B cell (primary cell): ENCODE measurements at regions of chr17 and their contacts with region 1.

Region 1: GRCh38 chr17:47286198-47286914 is 32.7 kb downstream of the ITGB3 start:
- DNase-seq: peak; percentile 83
- ATAC-seq: peak; percentile 87
- H3K4me3 ChIP-seq: no peak overlapping the region
- H3K4me3 Mint-ChIP-seq: peak overlapping the region; percentile 72
- H3K27ac ChIP-seq: peak overlapping the region; percentile 27 to 68
- H3K27ac Mint-ChIP-seq: peak overlapping the region; percentile 89
- H3K4me1 ChIP-seq: peaks cover 29% of the 10 kb centered on the region in 2 donors
- H3K4me1 Mint-ChIP-seq: peaks cover 41% of the 10 kb centered on the region
- H3K27me3 ChIP-seq: no peaks in the 10 kb centered on the region
- H3K27me3 Mint-ChIP-seq: no peaks in the 10 kb centered on the region
- CTCF ChIP-seq: no peak

Region 2: DNA sequence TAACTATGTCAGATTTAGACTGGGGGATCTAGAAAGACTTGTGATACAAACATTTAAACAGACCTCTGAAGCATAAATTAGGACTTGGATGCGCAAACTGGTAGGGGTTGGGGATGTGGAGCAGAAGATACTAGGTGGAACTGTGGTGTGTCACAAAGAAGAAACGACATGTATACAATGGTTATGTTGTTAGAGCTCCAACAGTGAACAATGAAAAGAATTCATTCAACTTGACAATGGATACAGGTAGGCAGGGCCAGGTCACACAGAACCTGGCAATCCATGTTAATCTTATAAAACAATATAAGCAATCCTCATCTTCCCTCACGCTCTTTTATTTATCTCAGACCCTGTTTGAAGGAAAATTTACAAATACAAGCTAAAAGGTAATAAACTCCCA is 199.3 kb before region 1 on chr17:
- CTCF ChIA-PET with region 1: no interaction called
- POLR2A ChIA-PET with region 1: no interaction called
- intact Hi-C with region 1: no loop called
- DNase-seq: no peak
- ATAC-seq: no peak
- H3K4me3 ChIP-seq: no peak overlapping the region
- H3K4me3 Mint-ChIP-seq: no peak overlapping the region
- H3K27ac ChIP-seq: no peak overlapping the region
- H3K27ac Mint-ChIP-seq: no peak overlapping the region
- H3K4me1 ChIP-seq: peaks cover 5 to 9% of the 10 kb centered on the region in 2 donors
- H3K4me1 Mint-ChIP-seq: peaks cover 39% of the 10 kb centered on the region
- H3K27me3 ChIP-seq: no peaks in the 10 kb centered on the region
- H3K27me3 Mint-ChIP-seq: no peaks in the 10 kb centered on the region
- CTCF ChIP-seq: no peak

Region 3: GRCh38 chr17:47165137-47165536 is 121.2 kb before region 1 on chr17:
- CTCF ChIA-PET with region 1: no interaction called
- POLR2A ChIA-PET with region 1: no interaction called
- intact Hi-C with region 1: no loop called
- DNase-seq: no peak
- ATAC-seq: no peak
- H3K4me3 ChIP-seq: no peak overlapping the region
- H3K4me3 Mint-ChIP-seq: no peak overlapping the region
- H3K27ac ChIP-seq: peak overlapping the region in 1 of 2 donors; percentile 55
- H3K27ac Mint-ChIP-seq: peak overlapping the region; percentile 38
- H3K4me1 ChIP-seq: peaks cover 14 to 19% of the 10 kb centered on the region in 2 donors
- H3K4me1 Mint-ChIP-seq: peaks cover 31% of the 10 kb centered on the region
- H3K27me3 ChIP-seq: no peaks in the 10 kb centered on the region
- H3K27me3 Mint-ChIP-seq: no peaks in the 10 kb centered on the region
- CTCF ChIP-seq: no peak

Region 4: DNA sequence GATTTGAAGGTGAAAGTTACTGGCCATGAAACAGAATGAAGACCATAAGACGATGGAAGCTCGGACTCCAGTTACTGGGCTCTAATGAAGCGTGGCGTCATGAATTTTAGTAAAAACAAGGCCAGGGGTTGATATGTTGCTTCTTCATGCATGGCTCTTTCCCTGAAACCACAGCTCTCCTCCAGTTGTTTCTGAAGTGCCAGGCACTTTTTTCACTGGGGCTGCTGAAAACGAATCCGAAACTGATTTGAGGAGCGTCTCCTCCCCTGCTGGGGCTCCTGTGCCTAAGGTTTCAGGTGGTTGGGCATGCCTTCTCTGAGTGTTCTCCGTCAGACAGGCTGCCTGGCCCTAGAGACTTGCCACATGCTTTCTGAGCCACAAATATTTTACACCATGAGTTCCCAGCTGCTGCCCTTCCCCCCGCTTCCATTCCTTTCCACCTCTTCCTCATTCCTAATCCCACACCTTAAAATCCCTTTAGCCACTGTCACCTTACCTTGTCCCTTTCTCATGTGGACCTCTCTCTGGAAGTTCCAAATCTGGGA is 80.9 kb before region 1 on chr17:
- CTCF ChIA-PET with region 1: no interaction called
- POLR2A ChIA-PET with region 1: no interaction called
- intact Hi-C with region 1: loop called (anchors 1 kb)
- DNase-seq: peak; percentile 87
- ATAC-seq: peak; percentile 69
- H3K4me3 ChIP-seq: peak overlapping the region; percentile 30 to 56 (median 45)
- H3K4me3 Mint-ChIP-seq: peak overlapping the region; percentile 87
- H3K27ac ChIP-seq: peak overlapping the region; percentile 96 to 97
- H3K27ac Mint-ChIP-seq: peak overlapping the region; percentile 99
- H3K4me1 ChIP-seq: peaks cover 67 to 74% of the 10 kb centered on the region in 2 donors
- H3K4me1 Mint-ChIP-seq: peaks cover 73% of the 10 kb centered on the region
- H3K27me3 ChIP-seq: no peaks in the 10 kb centered on the region
- H3K27me3 Mint-ChIP-seq: no peaks in the 10 kb centered on the region
- CTCF ChIP-seq: no peak

Region 5: GRCh38 chr17:47265983-47266541 is 20.3 kb before region 1 on chr17:
- CTCF ChIA-PET with region 1: interaction called, 6 read pairs
- POLR2A ChIA-PET with region 1: no interaction called
- intact Hi-C with region 1: loop called (anchors 1 kb)
- DNase-seq: no peak
- ATAC-seq: peak; percentile 89
- H3K4me3 ChIP-seq: no peak overlapping the region
- H3K4me3 Mint-ChIP-seq: peak overlapping the region; percentile 48
- H3K27ac ChIP-seq: no peak overlapping the region
- H3K27ac Mint-ChIP-seq: no peak overlapping the region
- H3K4me1 ChIP-seq: peaks cover 0 to 5% of the 10 kb centered on the region in 2 donors
- H3K4me1 Mint-ChIP-seq: peaks cover 24% of the 10 kb centered on the region
- H3K27me3 ChIP-seq: no peaks in the 10 kb centered on the region
- H3K27me3 Mint-ChIP-seq: no peaks in the 10 kb centered on the region
- CTCF ChIP-seq: no peak

Region 6: GRCh38 chr17:47368262-47368661 is 81.9 kb after region 1 on chr17:
- CTCF ChIA-PET with region 1: no interaction called
- POLR2A ChIA-PET with region 1: no interaction called
- intact Hi-C with region 1: no loop called
- DNase-seq: no peak
- ATAC-seq: no peak
- H3K4me3 ChIP-seq: no peak overlapping the region
- H3K4me3 Mint-ChIP-seq: no peak overlapping the region
- H3K27ac ChIP-seq: no peak overlapping the region
- H3K27ac Mint-ChIP-seq: no peak overlapping the region
- H3K4me1 ChIP-seq: no peaks in the 10 kb centered on the region
- H3K4me1 Mint-ChIP-seq: no peaks in the 10 kb centered on the region
- H3K27me3 ChIP-seq: no peaks in the 10 kb centered on the region
- H3K27me3 Mint-ChIP-seq: no peaks in the 10 kb centered on the region
- CTCF ChIP-seq: no peak